ENCODE measurements at regions of chr4 and their contacts with region 1.

Region 1: GRCh38 chr4:56387023-56388001 is at the start of gene AASDH:
- DNase-seq: peak; percentile 97
- ATAC-seq: peak; percentile 94
- H3K4me3 ChIP-seq: peak within 1 kb of the TSS; percentile 57 to 97 (median 81)
- H3K4me3 Mint-ChIP-seq: peak within 1 kb of the TSS; percentile 88
- H3K27ac ChIP-seq: peak within 1 kb of the TSS; percentile 86 to 89
- H3K27ac Mint-ChIP-seq: peak within 1 kb of the TSS; percentile 99
- H3K4me1 ChIP-seq: peaks cover 14% of the 10 kb centered on the region in 2 donors
- H3K4me1 Mint-ChIP-seq: peaks cover 30% of the 10 kb centered on the region
- H3K27me3 ChIP-seq: no peaks in the 10 kb centered on the region
- H3K27me3 Mint-ChIP-seq: no peaks in the 10 kb centered on the region
- CTCF ChIP-seq: no peak
- total RNA-seq, gene AASDH: 15.2 and 17.2 TPM in 2 replicates

Region 2: DNA sequence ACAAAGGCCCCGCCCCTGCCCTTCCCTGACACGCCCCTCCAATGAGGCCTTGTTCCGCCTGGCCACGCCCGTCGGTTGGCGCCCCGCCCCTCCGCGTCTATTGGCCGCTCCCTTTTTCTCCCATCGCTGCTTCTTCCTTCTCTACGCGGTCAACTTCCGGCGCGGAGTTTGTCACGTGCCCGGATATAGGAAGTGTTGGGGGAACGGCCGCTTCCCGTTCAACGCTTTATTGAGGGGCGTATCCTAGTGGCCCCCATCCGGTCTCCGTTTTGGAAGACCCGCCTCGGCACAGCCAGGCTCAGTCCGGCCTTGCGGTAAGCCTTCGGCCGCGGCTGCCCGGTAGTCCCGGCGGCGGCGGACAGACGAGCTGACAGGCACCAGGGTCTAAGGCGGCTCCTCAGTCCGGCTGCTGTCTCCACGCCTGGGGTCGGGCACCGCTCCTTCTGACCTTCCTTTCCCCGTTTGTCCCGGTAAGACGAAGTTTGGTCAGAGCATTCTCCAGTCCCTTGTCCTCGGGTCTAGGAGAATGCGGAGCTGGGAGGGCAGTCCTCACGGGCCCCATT is 533.7 kb before region 1 on chr4 and contains the start of gene EXOC1:
- CTCF ChIA-PET with region 1: no interaction called
- POLR2A ChIA-PET with region 1: no interaction called
- intact Hi-C with region 1: loop called (anchors 2 kb)
- DNase-seq: peak; percentile 97
- ATAC-seq: peak; percentile 100
- H3K4me3 ChIP-seq: peak within 1 kb of the TSS; percentile 85 to 98 (median 97)
- H3K4me3 Mint-ChIP-seq: no peak within 1 kb of the TSS
- H3K27ac ChIP-seq: peak within 1 kb of the TSS; percentile 71 to 86
- H3K27ac Mint-ChIP-seq: peak within 1 kb of the TSS; percentile 94
- H3K4me1 ChIP-seq: peaks cover 11 to 12% of the 10 kb centered on the region in 2 donors
- H3K4me1 Mint-ChIP-seq: peaks cover 13% of the 10 kb centered on the region
- H3K27me3 ChIP-seq: peaks cover 0 to 14% (median 2%) of the 10 kb centered on the region in 4 experiments
- H3K27me3 Mint-ChIP-seq: peaks cover 12% of the 10 kb centered on the region
- CTCF ChIP-seq: no peak
- total RNA-seq, gene EXOC1: 42.5 and 46.7 TPM in 2 replicates

Region 3: GRCh38 chr4:56374956-56375355 is 12.4 kb before region 1 on chr4:
- CTCF ChIA-PET with region 1: no interaction called
- POLR2A ChIA-PET with region 1: no interaction called
- intact Hi-C with region 1: no loop called
- DNase-seq: no peak
- ATAC-seq: no peak
- H3K4me3 ChIP-seq: no peak overlapping the region
- H3K4me3 Mint-ChIP-seq: no peak overlapping the region
- H3K27ac ChIP-seq: no peak overlapping the region
- H3K27ac Mint-ChIP-seq: no peak overlapping the region
- H3K4me1 ChIP-seq: no peaks in the 10 kb centered on the region
- H3K4me1 Mint-ChIP-seq: no peaks in the 10 kb centered on the region
- H3K27me3 ChIP-seq: no peaks in the 10 kb centered on the region
- H3K27me3 Mint-ChIP-seq: no peaks in the 10 kb centered on the region
- CTCF ChIP-seq: no peak

Region 4: DNA sequence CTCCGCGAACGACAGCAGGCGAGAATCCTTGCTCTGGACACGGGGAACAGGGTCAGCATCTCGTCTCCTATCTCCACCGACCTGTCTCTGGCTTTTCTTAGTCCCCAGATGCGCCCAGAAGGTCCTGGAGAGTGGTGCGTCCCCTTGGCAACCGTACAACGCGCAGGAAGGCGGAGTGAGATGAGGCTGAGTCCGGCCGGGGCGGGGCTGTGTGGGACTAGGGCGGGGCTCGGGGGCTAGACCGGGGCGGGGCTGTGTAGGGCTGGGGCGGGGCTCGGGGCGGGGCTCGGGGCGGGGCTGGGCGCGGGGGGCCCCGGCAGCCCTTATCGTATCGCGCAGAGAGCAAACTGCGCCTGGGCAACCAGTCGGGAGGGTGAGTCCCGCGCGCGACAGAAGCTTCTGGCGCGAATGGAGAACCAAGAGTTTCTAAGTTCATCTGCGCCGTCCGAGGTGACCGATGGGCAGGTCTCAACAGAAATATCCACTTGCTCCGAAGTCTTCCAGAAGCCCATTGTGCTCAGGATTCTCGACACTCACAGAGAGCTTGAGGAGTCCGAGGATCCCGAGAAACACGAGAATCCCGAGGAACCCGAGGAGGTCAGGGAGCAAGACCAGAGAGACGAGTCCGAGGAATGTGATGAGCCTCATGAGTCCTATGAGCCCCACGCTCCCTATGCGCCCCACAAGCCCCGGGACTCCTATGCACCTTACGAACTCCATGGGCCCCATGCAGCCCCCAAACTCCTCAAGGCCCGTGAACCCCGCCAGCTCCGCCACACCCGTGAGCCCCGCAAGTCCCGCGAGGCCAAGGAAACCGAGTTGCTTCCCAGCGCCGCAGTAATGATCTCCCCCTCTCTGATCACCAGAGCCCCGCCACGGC is 143.2 kb after region 1 on chr4:
- CTCF ChIA-PET with region 1: no interaction called
- POLR2A ChIA-PET with region 1: no interaction called
- intact Hi-C with region 1: loop called (anchors 5 kb)
- DNase-seq: peak; percentile 82
- ATAC-seq: peak; percentile 100
- H3K4me3 ChIP-seq: peak overlapping the region; percentile 56 to 77 (median 73)
- H3K4me3 Mint-ChIP-seq: no peak overlapping the region
- H3K27ac ChIP-seq: no peak overlapping the region
- H3K27ac Mint-ChIP-seq: peak overlapping the region; percentile 12
- H3K4me1 ChIP-seq: peaks cover 7 to 12% of the 10 kb centered on the region in 2 donors
- H3K4me1 Mint-ChIP-seq: peaks cover 4% of the 10 kb centered on the region
- H3K27me3 ChIP-seq: peaks cover 0 to 36% (median 22%) of the 10 kb centered on the region in 4 experiments
- H3K27me3 Mint-ChIP-seq: peaks cover 7% of the 10 kb centered on the region
- CTCF ChIP-seq: no peak

Region 5: DNA sequence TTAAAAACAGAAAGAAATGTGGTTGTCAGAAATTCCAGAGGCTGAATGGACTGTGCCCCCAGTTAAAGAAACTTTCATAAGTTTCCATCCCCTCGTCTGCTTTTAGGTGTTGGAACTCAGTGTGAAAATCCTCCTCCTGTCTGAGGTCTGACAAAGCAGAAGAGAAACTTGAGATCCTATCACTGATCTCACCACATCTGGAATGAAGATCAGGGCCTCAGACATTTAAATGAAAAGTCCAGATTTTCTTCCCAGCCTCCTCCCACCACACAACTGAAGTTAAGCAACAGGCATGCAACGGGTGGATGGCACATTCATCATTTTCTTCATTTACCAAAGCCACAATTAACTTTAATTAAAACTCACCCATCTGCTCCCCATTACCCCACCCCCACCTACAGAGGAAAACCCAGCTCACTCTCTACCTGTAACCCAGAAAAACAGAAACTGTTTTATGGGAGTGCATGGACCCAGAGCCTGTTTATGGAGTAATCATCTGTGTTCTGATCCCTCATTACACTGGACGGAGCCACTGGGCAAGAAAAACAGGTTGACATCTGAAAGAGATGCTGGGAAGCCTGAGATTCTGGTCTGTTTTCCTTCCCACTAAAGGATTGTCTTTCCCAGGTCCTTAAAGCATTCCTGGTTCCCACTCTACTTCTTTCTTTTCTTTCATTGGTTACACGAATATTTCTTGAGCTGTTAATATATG is 351.9 kb after region 1 on chr4:
- CTCF ChIA-PET with region 1: no interaction called
- POLR2A ChIA-PET with region 1: no interaction called
- intact Hi-C with region 1: no loop called
- DNase-seq: no peak
- ATAC-seq: no peak
- H3K4me3 ChIP-seq: no peak overlapping the region
- H3K4me3 Mint-ChIP-seq: no peak overlapping the region
- H3K27ac ChIP-seq: no peak overlapping the region
- H3K27ac Mint-ChIP-seq: no peak overlapping the region
- H3K4me1 ChIP-seq: peaks cover 5 to 8% of the 10 kb centered on the region in 2 donors
- H3K4me1 Mint-ChIP-seq: peaks cover 15% of the 10 kb centered on the region
- H3K27me3 ChIP-seq: no peaks in the 10 kb centered on the region
- H3K27me3 Mint-ChIP-seq: no peaks in the 10 kb centered on the region
- CTCF ChIP-seq: no peak

Region 6: DNA sequence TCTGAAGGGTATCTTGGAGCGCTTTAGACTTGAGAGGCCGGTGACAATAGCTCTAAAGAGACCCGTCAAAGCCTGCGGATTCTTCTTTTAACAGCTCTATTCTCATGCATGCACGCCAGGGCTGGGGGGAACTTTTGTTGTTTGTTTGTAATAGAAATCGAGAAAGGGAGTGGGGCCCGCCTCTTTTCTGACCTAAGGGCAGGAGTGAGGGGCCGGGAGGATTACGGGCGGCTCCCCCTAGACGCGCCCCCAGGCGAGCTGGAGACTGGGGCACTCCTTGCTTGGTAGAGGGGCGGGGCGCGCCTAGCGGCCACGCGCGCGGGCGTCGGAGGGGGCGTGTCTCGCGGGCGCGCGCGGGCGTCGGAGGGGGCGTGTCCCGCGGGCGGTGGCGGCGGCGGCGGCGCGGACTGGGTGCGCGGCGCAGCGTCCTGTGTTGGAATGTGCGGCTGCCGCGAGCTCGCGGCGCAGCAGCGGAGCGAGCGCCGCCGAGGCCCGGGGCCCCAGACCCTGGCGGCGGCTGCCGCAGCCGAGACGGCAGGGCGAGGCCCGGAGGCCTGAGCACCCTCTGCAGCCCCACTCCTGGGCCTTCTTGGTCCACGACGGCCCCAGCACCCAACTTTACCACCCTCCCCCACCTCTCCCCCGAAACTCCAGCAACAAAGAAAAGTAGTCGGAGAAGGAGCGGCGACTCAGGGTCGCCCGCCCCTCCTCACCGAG is 520.3 kb after region 1 on chr4 and contains the start of gene REST:
- CTCF ChIA-PET with region 1: no interaction called
- POLR2A ChIA-PET with region 1: no interaction called
- intact Hi-C with region 1: loop called (anchors 1 kb)
- DNase-seq: peak; percentile 92
- ATAC-seq: peak; percentile 65
- H3K4me3 ChIP-seq: peak within 1 kb of the TSS; percentile 62 to 98 (median 88)
- H3K4me3 Mint-ChIP-seq: peak within 1 kb of the TSS; percentile 93
- H3K27ac ChIP-seq: peak within 1 kb of the TSS; percentile 47 to 77
- H3K27ac Mint-ChIP-seq: peak within 1 kb of the TSS; percentile 92
- H3K4me1 ChIP-seq: peaks cover 29 to 35% of the 10 kb centered on the region in 2 donors
- H3K4me1 Mint-ChIP-seq: peaks cover 42% of the 10 kb centered on the region
- H3K27me3 ChIP-seq: no peaks in the 10 kb centered on the region
- H3K27me3 Mint-ChIP-seq: peaks cover 3% of the 10 kb centered on the region
- CTCF ChIP-seq: no peak
- total RNA-seq, gene REST: 59.4 and 61.1 TPM in 2 replicates

Measured in B cell (primary cell).